Aorta (tissue), 5 donors: ENCODE measurements at regions of chr1 and their contacts with region 1.

Region 1: GRCh38 chr1:155091071-155091709 is 12.6 kb downstream of the EFNA3 start:
- DNase-seq: peak; percentile 84 to 94
- ATAC-seq: peak; percentile 82
- H3K4me3 ChIP-seq: no peak overlapping the region
- H3K27ac ChIP-seq: no peak overlapping the region
- H3K4me1 ChIP-seq: no peaks in the 10 kb centered on the region
- H3K27me3 ChIP-seq: no peaks in the 10 kb centered on the region

Region 2: DNA sequence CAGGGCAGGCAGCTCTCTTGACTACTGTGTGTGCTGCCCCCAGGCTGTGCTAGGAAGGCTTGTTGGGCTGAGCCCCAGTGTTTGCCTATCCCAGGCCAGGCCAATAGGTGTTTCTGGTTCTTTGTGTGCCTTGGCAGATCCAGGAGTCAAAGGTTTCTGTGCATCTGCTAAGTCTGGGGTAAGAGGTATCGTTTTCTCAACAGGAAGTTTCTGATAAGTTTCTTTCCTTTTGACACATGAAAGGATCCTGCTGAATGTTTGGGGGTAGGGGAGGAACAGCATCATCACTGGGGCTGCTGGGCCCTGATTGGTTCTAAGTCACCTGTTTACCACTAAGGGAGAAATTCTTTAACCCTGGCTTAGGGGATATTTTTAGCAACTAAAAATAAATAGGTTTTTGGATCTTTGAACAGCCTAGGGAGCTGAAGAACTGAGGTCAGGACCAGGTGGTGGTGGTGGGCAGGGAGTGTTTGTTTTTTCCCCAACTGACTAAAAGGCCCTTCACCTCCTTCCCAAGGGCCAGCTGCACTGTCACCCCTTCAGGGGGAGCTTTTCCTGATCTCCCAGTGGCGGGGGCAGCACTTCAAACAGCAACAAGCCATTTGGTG is 306.2 kb before region 1 on chr1:
- intact Hi-C with region 1: no loop called
- DNase-seq: peak; percentile 20 to 56
- ATAC-seq: peak; percentile 46
- H3K4me3 ChIP-seq: no peak overlapping the region
- H3K27ac ChIP-seq: no peak overlapping the region
- H3K4me1 ChIP-seq: no peaks in the 10 kb centered on the region
- H3K27me3 ChIP-seq: no peaks in the 10 kb centered on the region

Region 3: DNA sequence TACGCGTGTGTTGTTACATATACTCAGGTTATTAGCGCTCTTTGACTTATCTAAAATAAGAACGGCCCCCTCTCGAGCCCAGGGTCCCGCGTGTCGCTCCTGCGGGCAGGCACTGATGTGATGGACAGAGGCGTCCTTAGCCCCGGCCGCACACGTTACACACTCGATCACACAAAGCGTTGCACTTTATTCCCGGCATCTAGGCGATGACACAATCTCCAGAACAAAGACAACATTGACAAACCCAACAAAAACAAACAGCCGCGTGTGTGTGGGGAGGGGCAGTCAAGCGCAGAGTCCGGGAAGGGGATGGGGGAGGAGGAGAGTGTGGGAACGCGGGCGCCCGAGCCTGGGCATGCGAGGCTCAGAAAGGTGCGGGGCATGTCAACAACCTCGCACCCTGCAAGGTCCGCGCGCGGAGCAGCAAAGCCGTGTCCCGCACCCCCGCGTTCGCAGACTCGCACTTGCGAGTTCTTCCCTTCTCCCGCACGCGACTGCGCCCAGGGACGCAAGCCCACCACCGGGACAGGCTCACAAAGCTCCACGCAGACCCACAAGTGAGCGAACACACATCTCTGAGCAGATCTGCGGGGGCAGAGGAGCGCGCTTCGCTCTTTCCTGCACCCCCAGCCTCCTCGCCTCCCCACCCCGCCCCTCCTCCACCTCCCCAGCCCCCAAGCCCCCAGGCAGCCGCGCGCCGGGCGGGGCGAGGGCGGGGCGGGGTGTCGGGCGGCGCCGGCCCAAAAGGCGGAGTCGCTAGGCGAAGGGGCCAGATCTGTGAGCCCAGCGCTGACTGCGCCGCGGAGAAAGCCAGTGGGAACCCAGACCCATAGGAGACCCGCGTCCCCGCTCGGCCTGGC is 36.1 kb after region 1 on chr1 and contains the start of gene EFNA1:
- intact Hi-C with region 1: loop called (anchors 5 kb)
- DNase-seq: peak; percentile 71 to 88
- ATAC-seq: peak; percentile 72
- H3K4me3 ChIP-seq: peak within 1 kb of the TSS; percentile 1 to 18
- H3K27ac ChIP-seq: no peak within 1 kb of the TSS
- H3K4me1 ChIP-seq: no peaks in the 10 kb centered on the region
- H3K27me3 ChIP-seq: no peaks in the 10 kb centered on the region
- total RNA-seq, gene EFNA1: 18.9 to 49.1 TPM

Region 4: GRCh38 chr1:155167166-155168104 is 76.2 kb after region 1 on chr1:
- intact Hi-C with region 1: loop called (anchors 1 to 2 kb)
- DNase-seq: peak; percentile 92 to 96
- ATAC-seq: peak; percentile 89
- H3K4me3 ChIP-seq: no peak overlapping the region
- H3K27ac ChIP-seq: no peak overlapping the region
- H3K4me1 ChIP-seq: no peaks in the 10 kb centered on the region
- H3K27me3 ChIP-seq: no peaks in the 10 kb centered on the region